Left lung (tissue), 14 donors: ENCODE measurements at regions of chr7 and their contacts with region 1.

Region 1: GRCh38 chr7:98434095-98434494 is 33.2 kb upstream of the BAIAP2L1 start:
- DNase-seq: no peak
- ATAC-seq: no peak
- H3K4me3 ChIP-seq: no peak overlapping the region
- H3K27ac ChIP-seq: no peak overlapping the region
- H3K4me1 ChIP-seq: no peaks in the 10 kb centered on the region
- H3K27me3 ChIP-seq: no peaks in the 10 kb centered on the region
- CTCF ChIP-seq: no peak

Region 2: GRCh38 chr7:98539879-98540278 is 105.8 kb after region 1 on chr7:
- intact Hi-C with region 1: no loop called
- DNase-seq: no peak
- ATAC-seq: no peak
- H3K4me3 ChIP-seq: no peak overlapping the region
- H3K27ac ChIP-seq: no peak overlapping the region
- H3K4me1 ChIP-seq: no peaks in the 10 kb centered on the region
- H3K27me3 ChIP-seq: no peaks in the 10 kb centered on the region
- CTCF ChIP-seq: no peak

Region 3: GRCh38 chr7:98687078-98687800 is 253.1 kb after region 1 on chr7:
- intact Hi-C with region 1: no loop called
- DNase-seq: no peak
- ATAC-seq: no peak
- H3K4me3 ChIP-seq: no peak overlapping the region
- H3K27ac ChIP-seq: no peak overlapping the region
- H3K4me1 ChIP-seq: no peaks in the 10 kb centered on the region
- H3K27me3 ChIP-seq: peaks cover 0 to 2% of the 10 kb centered on the region in 2 donors
- CTCF ChIP-seq: no peak

Region 4: GRCh38 chr7:98745722-98746318 is 311.7 kb after region 1 on chr7:
- intact Hi-C with region 1: loop called in 1 of 2 experiments (anchors 10 kb)
- DNase-seq: peak; percentile 11 to 93 (median 55)
- ATAC-seq: peak; percentile 84
- H3K4me3 ChIP-seq: no peak overlapping the region
- H3K27ac ChIP-seq: no peak overlapping the region
- H3K4me1 ChIP-seq: no peaks in the 10 kb centered on the region
- H3K27me3 ChIP-seq: peaks cover 0 to 5% of the 10 kb centered on the region in 2 donors
- CTCF ChIP-seq: peak; percentile 77 to 79

Region 5: GRCh38 chr7:98841179-98841997 is 407.3 kb after region 1 on chr7:
- intact Hi-C with region 1: loop called in 1 of 2 experiments (anchors 5 kb)
- DNase-seq: peak; percentile 32 to 87 (median 57)
- ATAC-seq: peak; percentile 95
- H3K4me3 ChIP-seq: no peak overlapping the region
- H3K27ac ChIP-seq: no peak overlapping the region
- H3K4me1 ChIP-seq: peaks cover 4% of the 10 kb centered on the region in 2 donors
- H3K27me3 ChIP-seq: peaks cover 0 to 39% of the 10 kb centered on the region in 2 donors
- CTCF ChIP-seq: peak; percentile 91 to 92